CD8-positive, alpha-beta T cell (primary cell): ENCODE measurements at regions of chr12 and their contacts with region 1.

Region 1: DNA sequence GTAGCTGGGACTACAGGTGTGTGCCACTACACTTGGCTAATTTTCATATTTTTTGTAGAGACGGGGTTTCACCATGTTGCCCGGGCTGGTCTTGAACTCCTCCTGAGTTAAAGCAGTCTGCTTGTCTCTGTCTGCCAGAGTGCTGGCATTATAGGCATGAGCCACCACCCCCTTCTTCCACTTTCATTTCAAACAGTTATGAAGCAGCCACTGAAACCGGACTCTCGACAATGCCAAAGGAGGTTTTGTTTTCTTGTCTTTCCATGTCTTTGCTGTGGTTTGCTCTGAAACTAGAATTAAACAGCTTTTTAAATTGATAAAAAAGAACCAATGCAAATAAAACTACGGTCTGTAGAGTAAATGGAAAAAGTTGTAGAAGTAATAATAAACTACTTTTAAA is 30.4 kb downstream of the RAP1B start:
- DNase-seq: peak in 4 of 9 experiments; percentile 16 to 63 (median 44)
- ATAC-seq: peak; percentile 67
- H3K4me3 ChIP-seq: peak overlapping the region; percentile 12 to 25
- H3K4me3 Mint-ChIP-seq: peak overlapping the region; percentile 74
- H3K27ac ChIP-seq: peak overlapping the region; percentile 27 to 52
- H3K27ac Mint-ChIP-seq: peak overlapping the region; percentile 82
- H3K4me1 ChIP-seq: peaks cover 86% of the 10 kb centered on the region
- H3K4me1 Mint-ChIP-seq: peaks cover 90% of the 10 kb centered on the region
- H3K27me3 ChIP-seq: no peaks in the 10 kb centered on the region
- H3K27me3 Mint-ChIP-seq: no peaks in the 10 kb centered on the region
- CTCF ChIP-seq: no peak

Region 2: DNA sequence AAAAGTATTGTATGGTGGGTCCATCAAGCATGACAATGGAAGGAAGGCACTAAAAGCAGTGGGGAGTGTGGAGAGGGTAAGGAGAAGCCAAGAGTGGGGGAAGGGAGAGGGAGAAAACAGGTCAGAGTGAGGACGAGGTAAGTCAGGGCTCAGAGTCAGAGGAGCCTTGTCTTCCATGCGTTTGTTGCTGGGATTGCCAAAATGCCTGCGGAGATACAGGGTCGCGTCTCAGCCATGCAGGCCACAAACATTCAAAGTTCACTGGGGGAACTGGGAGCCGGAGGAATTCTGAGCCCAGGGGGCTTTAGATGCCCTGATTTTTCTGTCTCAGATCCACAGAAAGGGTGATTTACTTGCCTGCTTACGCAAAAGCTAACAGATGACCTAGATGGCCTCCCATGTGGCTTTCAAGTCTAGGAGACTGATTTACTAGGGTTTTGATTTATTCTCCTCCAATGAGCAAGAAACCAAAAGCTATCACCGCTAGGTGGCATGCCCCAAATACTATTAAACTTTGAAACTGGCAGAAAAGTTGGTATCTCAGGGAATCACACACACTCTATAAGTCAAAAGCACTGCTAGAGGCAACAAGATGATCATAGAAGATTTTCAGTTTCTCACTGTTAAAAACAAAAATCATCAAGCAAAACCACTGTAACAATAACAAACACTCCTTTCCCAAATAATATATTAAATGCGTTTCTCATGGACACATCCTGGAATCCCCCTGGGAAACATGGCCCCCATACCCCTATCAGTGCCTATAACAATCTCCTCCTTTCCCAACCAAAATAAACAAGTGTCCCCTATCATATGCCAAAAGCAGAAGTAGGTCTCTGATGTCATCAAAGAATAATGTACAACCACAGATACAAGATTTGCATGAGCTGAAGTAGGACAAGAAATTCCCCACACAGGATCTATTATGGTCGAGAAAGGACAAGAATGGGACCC is 282.3 kb before region 1 on chr12:
- CTCF ChIA-PET with region 1: interaction called, 5 read pairs
- POLR2A ChIA-PET with region 1: no interaction called
- intact Hi-C with region 1: loop called in 1 of 2 experiments (anchors 1 kb)
- DNase-seq: peak; percentile 46 to 85 (median 68)
- ATAC-seq: peak; percentile 93
- H3K4me3 ChIP-seq: no peak overlapping the region
- H3K4me3 Mint-ChIP-seq: no peak overlapping the region
- H3K27ac ChIP-seq: no peak overlapping the region
- H3K27ac Mint-ChIP-seq: peak overlapping the region; percentile 29
- H3K4me1 ChIP-seq: peaks cover 14% of the 10 kb centered on the region
- H3K4me1 Mint-ChIP-seq: peaks cover 31% of the 10 kb centered on the region
- H3K27me3 ChIP-seq: no peaks in the 10 kb centered on the region
- H3K27me3 Mint-ChIP-seq: no peaks in the 10 kb centered on the region
- CTCF ChIP-seq: peak; percentile 64

Region 3: GRCh38 chr12:68446893-68447796 is 194.0 kb before region 1 on chr12:
- CTCF ChIA-PET with region 1: no interaction called
- POLR2A ChIA-PET with region 1: no interaction called
- intact Hi-C with region 1: loop called in 1 of 2 experiments (anchors 5 kb)
- DNase-seq: no peak
- ATAC-seq: no peak
- H3K4me3 ChIP-seq: no peak overlapping the region
- H3K4me3 Mint-ChIP-seq: no peak overlapping the region
- H3K27ac ChIP-seq: peak overlapping the region in 1 of 2 experiments; percentile 63
- H3K27ac Mint-ChIP-seq: no peak overlapping the region
- H3K4me1 ChIP-seq: peaks cover 46% of the 10 kb centered on the region
- H3K4me1 Mint-ChIP-seq: peaks cover 63% of the 10 kb centered on the region
- H3K27me3 ChIP-seq: no peaks in the 10 kb centered on the region
- H3K27me3 Mint-ChIP-seq: no peaks in the 10 kb centered on the region
- CTCF ChIP-seq: no peak

Region 4: GRCh38 chr12:68623984-68624383 is 17.2 kb before region 1 on chr12:
- CTCF ChIA-PET with region 1: interaction called, 3 read pairs
- POLR2A ChIA-PET with region 1: interaction called, 4 read pairs
- intact Hi-C with region 1: loop called in 1 of 2 experiments (anchors 2 kb)
- DNase-seq: no peak
- ATAC-seq: no peak
- H3K4me3 ChIP-seq: no peak overlapping the region
- H3K4me3 Mint-ChIP-seq: peak overlapping the region; percentile 35
- H3K27ac ChIP-seq: peak overlapping the region in 1 of 2 experiments; percentile 22
- H3K27ac Mint-ChIP-seq: peak overlapping the region; percentile 50
- H3K4me1 ChIP-seq: peaks cover 82% of the 10 kb centered on the region
- H3K4me1 Mint-ChIP-seq: peaks cover 84% of the 10 kb centered on the region
- H3K27me3 ChIP-seq: no peaks in the 10 kb centered on the region
- H3K27me3 Mint-ChIP-seq: no peaks in the 10 kb centered on the region
- CTCF ChIP-seq: no peak

Region 5: DNA sequence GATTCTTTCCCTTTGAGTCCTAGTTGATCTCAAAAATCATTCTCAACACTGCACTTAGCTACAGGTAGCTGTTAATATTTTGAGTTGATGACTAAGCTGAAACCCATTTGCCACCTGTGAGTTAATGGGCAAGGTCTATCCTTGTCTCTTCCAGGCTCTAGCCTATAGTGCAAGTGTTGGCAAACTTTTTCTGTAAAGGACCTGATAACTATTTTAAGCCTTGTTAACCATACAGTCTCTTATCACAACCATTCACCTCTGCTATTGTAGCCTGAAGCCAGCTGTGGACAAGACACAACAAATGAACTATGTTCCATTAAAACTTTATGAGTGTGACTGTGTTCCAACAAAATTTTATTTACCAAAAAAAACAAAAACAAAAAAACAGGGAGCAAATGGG is 11.1 kb before region 1 on chr12:
- CTCF ChIA-PET with region 1: interaction called, 3 read pairs
- POLR2A ChIA-PET with region 1: interaction called, 4 read pairs
- intact Hi-C with region 1: loop called in 1 of 2 experiments (anchors 2 kb)
- DNase-seq: no peak
- ATAC-seq: peak; percentile 35
- H3K4me3 ChIP-seq: no peak overlapping the region
- H3K4me3 Mint-ChIP-seq: peak overlapping the region; percentile 23
- H3K27ac ChIP-seq: peak overlapping the region in 1 of 2 experiments; percentile 42
- H3K27ac Mint-ChIP-seq: peak overlapping the region; percentile 70
- H3K4me1 ChIP-seq: peaks cover 82% of the 10 kb centered on the region
- H3K4me1 Mint-ChIP-seq: peaks cover 85% of the 10 kb centered on the region
- H3K27me3 ChIP-seq: no peaks in the 10 kb centered on the region
- H3K27me3 Mint-ChIP-seq: no peaks in the 10 kb centered on the region
- CTCF ChIP-seq: no peak